ENCODE measurements at regions of chr9 and their contacts with region 1.

Region 1: DNA sequence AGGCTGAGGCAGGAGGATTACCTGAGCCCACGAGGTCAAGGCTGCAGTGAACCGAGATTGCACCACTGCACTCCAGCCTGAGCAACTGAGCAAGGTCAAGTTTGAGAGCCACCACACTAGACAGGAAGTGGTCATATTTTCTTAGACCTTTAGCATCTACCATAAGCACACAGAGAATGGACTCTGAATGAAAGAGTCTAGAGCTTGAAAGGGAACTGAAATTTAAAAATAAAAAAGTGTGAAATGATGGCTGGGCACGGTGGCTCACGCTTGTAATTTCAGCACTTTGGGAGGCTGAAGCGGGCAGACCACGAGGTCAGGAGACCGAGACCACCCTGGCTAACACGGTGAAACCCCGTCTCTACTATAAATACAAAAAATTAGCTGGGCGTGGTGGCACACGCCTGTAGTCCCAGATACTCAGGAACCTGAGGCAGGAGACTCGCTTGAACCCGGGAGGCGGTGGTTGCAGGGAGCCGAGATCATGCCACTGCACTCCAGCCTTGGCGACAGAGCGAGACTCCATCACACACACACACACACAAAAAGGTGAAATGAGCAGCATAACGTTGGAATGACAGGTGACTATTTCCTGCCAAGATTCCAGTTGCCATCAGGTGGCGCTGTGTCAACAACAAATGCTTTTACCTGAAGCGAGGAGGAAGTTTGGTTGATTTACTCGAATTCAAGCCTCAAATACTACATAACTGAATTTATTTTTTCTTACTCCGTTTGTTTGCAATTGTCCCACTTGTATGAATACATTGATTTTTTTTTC is 21.3 kb upstream of the AK3 start:
- DNase-seq: peak; percentile 87
- H3K4me3 Mint-ChIP-seq: peak overlapping the region; percentile 18
- H3K27ac Mint-ChIP-seq: peak overlapping the region; percentile 10
- H3K4me1 Mint-ChIP-seq: peaks cover 16% of the 10 kb centered on the region
- H3K27me3 Mint-ChIP-seq: peaks cover 8% of the 10 kb centered on the region

Region 2: DNA sequence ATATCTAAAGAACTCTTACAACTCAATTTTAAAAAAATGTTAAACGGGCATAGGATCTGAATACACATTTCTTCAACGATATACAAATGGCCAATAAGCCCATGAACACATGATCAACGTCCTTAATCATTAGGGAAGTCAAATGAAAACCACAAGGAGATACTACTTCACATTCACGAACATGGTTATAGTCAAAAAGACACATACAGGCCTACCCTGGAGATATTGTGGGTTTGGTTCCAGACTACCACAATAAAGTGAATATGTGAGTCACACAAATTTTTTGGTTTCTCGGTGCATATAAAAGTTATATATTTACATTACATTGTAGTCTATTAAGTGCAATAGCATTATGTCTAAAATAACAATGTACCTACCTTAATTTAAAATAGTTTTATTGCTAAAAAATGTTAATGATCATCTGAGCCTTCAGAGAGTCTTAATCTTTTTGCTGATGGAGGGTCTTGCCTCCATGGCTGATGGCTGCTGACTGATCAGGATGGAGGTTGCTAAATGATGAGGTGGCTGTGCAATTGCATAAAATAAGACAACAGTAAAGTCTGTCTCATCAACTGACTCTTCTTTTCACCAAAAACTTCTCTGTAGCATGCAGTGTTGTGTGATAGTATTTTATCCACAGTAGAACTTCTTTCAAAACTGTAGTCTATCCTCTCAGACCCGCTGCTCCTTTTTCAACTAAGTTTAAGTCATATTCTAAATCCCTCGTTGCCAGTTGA is 36.4 kb before region 1 on chr9:
- CTCF ChIA-PET with region 1: no interaction called
- POLR2A ChIA-PET with region 1: no interaction called
- DNase-seq: no peak
- H3K4me3 Mint-ChIP-seq: no peak overlapping the region
- H3K27ac Mint-ChIP-seq: no peak overlapping the region
- H3K4me1 Mint-ChIP-seq: peaks cover 25% of the 10 kb centered on the region
- H3K27me3 Mint-ChIP-seq: no peaks in the 10 kb centered on the region

Region 3: DNA sequence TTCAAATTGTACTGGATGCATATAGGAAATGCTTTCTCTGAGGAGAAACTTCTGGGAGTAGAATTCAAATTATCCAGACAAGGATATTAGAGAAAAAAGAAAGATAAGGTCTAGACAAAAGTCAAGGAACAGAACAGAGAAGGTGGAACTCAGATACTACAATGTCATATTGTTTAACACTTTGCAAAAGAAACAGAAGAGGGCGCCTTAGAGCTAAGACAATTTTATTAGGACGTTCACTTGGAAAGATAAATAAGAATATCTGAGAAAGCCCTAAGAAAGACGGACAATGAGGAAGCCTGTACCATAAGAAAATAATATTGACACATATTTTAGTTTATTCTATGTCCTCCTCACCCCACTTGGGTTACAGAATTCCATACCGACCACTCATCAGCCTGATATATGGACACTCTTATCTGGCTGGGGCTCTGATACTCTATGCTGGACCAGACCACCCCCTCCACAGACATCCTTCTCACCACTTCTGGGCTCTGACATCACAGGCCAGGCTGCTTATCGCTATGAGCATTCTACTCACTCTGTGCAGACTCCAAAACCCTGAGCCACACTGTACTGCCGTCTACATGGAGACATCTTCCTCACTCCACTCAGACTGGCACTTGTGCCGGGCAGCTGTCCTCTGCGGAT is 12.1 kb before region 1 on chr9:
- CTCF ChIA-PET with region 1: interaction called, 62 read pairs
- POLR2A ChIA-PET with region 1: no interaction called
- DNase-seq: no peak
- H3K4me3 Mint-ChIP-seq: no peak overlapping the region
- H3K27ac Mint-ChIP-seq: no peak overlapping the region
- H3K4me1 Mint-ChIP-seq: peaks cover 7% of the 10 kb centered on the region
- H3K27me3 Mint-ChIP-seq: peaks cover 4% of the 10 kb centered on the region

Region 4: DNA sequence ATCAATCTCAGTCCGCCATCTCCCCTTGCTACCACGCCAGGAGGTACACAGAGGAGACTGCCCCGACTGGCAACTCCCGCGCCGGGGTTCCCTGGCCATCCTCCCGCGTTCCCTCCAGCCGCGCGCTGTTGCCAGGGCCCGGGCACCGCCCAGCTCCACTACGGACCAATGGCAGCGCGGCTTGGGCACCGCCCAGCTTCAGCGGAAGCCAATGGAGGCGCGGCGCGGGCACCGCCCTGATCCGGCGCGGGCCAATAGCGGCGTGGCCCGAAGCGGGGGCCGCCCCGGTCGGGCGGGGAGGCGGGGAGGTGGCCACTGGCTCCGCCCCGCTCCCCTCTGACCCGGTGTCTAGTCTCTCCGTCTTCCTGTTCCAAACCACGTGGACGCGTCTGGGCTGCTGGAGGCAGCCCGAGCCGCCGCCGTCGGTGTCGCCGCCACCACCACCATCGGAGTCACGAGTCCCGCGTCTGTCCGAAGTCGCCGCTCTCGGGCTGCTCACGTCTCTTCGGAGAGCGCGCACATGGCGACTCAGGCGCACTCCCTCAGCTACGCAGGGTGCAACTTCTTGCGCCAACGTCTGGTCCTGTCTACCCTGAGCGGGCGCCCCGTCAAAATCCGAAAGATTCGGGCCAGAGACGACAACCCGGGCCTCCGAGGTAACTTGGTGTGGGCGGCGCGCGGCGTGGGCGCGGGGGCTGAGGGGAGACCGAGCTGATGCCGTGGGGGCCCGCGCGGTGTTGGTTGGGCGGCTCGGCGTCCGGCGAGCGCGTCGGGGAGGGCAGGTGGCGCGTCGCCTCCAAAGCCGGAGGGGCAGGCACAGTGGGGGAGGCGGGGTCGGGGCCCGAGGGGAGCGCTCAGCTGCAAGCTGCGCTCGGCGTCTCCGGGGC is 30.5 kb after region 1 on chr9 and contains the start of gene RCL1:
- CTCF ChIA-PET with region 1: interaction called, 17 read pairs
- POLR2A ChIA-PET with region 1: interaction called, 4 read pairs
- DNase-seq: peak; percentile 98
- H3K4me3 Mint-ChIP-seq: peak within 1 kb of the TSS; percentile 94
- H3K27ac Mint-ChIP-seq: peak within 1 kb of the TSS; percentile 89
- H3K4me1 Mint-ChIP-seq: peaks cover 44% of the 10 kb centered on the region
- H3K27me3 Mint-ChIP-seq: no peaks in the 10 kb centered on the region
- total RNA-seq, gene RCL1: 11.5 to 12.3 TPM

Region 5: DNA sequence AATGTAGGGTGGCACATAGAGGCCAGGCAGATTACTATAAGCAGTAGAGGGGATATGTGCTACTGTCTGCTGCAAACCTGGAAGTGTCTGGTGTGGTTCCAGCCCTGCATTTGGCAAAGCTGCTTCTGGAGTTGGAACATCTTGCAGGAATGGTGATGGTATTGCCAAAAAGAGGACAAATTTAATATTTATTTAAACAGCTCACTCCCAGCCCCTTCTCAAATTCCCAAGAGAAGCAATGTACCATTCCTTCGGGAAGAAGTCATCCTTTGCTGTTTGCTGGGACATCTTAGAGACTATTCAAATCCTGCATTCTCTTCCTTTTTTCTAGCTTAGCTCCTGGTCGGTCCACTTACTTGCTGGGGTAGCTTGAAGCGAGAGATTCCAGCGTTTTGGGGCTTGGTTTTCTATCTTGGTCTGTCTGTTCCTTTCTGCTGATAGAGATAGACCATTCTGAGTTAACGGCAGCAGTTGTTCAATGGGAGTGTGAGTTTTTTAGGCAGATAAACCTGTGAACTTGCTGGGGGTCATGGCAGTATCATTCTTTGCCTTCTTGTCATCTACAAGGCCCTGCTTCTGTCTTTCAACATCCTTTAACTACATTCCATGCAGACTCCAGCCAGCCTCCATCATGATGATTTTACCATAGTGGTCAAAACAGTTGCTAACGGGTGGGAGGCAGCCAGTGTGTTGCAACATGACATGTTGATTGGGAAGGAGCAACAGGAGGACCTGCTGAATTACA is 100.4 kb after region 1 on chr9:
- CTCF ChIA-PET with region 1: interaction called, 11 read pairs
- POLR2A ChIA-PET with region 1: no interaction called
- DNase-seq: no peak
- H3K4me3 Mint-ChIP-seq: no peak overlapping the region
- H3K27ac Mint-ChIP-seq: no peak overlapping the region
- H3K4me1 Mint-ChIP-seq: peaks cover 38% of the 10 kb centered on the region
- H3K27me3 Mint-ChIP-seq: no peaks in the 10 kb centered on the region

Region 6: GRCh38 chr9:4886698-4887097 is 124.4 kb after region 1 on chr9:
- CTCF ChIA-PET with region 1: no interaction called
- POLR2A ChIA-PET with region 1: no interaction called
- DNase-seq: no peak
- H3K4me3 Mint-ChIP-seq: no peak overlapping the region
- H3K27ac Mint-ChIP-seq: no peak overlapping the region
- H3K4me1 Mint-ChIP-seq: no peaks in the 10 kb centered on the region
- H3K27me3 Mint-ChIP-seq: no peaks in the 10 kb centered on the region

Region 7: DNA sequence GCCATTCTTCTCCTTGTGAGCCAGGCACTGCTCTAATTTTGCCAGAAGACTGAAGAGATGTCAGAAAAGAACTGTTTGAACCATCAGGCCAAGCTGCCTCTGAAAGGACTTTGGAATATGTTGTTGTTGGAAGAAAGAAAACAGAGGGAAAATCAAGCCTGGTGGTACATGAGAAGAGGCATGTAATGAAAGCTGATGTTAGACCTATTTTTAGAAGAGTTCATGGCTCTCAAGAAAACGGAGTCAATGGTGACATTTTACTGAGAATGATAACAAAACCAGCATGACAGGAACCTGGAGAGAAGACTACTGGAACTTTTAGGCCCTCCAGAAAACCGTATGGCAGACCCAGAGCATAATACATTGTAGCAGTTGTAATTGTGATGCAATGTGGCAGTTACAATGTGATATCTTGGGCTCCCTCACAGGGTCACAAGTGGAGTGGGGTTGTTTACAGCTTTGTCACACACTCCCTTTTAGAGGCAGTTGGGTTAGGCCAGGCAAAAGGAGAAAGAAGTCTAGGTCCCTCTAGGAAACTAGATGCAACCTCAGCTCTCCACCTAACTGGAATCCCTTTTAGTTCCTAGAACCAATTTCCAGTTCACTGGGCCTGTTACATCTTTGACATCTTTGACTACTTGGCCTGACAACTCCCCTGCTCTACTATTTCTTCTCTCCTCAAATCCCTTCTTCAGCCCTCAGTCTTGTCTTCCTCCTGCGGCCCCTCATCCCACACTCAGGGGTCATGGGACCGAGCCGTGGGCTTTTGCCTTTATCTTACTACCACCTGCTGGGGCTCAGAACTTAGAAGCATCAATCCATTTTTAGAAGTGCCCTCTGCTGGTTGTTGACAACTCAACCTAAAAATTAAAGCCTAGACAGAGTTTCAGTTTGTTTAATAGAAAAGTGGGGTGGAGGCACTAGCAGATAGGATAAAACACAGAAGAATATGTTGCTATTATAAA is 161.6 kb after region 1 on chr9:
- CTCF ChIA-PET with region 1: interaction called, 23 read pairs
- POLR2A ChIA-PET with region 1: no interaction called
- DNase-seq: no peak
- H3K4me3 Mint-ChIP-seq: no peak overlapping the region
- H3K27ac Mint-ChIP-seq: peak overlapping the region; percentile 11
- H3K4me1 Mint-ChIP-seq: peaks cover 26% of the 10 kb centered on the region
- H3K27me3 Mint-ChIP-seq: no peaks in the 10 kb centered on the region

Region 8: GRCh38 chr9:5425006-5425628 is 662.8 kb after region 1 on chr9:
- CTCF ChIA-PET with region 1: interaction called, 14 read pairs
- POLR2A ChIA-PET with region 1: no interaction called
- DNase-seq: no peak
- H3K4me3 Mint-ChIP-seq: no peak overlapping the region
- H3K27ac Mint-ChIP-seq: no peak overlapping the region
- H3K4me1 Mint-ChIP-seq: no peaks in the 10 kb centered on the region
- H3K27me3 Mint-ChIP-seq: no peaks in the 10 kb centered on the region

Region 9: DNA sequence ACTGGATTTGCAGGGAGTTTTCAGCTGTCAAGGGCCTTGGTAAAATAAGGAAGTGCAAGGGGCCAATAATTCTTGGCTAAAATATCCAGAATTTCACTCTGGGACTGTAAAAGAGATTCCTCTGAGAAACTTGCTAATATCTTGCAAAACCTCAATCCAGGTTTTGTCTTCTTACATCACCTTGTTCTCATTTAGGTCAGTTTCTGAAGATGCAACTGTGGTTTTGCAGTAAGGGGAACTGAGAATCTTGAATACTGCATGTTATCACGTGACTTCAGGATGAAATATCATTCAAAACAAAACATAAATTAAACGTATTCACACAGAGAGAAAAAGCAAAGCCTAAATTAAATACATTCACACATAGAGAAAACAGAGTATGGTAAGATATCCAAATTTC is 831.6 kb after region 1 on chr9:
- CTCF ChIA-PET with region 1: interaction called, 19 read pairs
- POLR2A ChIA-PET with region 1: no interaction called
- DNase-seq: no peak
- H3K4me3 Mint-ChIP-seq: no peak overlapping the region
- H3K27ac Mint-ChIP-seq: no peak overlapping the region
- H3K4me1 Mint-ChIP-seq: peaks cover 25% of the 10 kb centered on the region
- H3K27me3 Mint-ChIP-seq: peaks cover 5% of the 10 kb centered on the region

Measured in activated CD4-positive, alpha-beta memory T cell treated with anti-CD3 and anti-CD28 coated beads, Interleukin-2, amount 10 ng/mL, durations not matched to agents 7 days and 5 days (primary cell).